OCI-LY7 (cell line): ENCODE measurements at regions of chr2 and their contacts with region 1.

Region 1: GRCh38 chr2:41782306-41783158 is 265.3 kb upstream of the PKDCC start:
- DNase-seq: peak; percentile 39
- H3K4me3 ChIP-seq: no peak overlapping the region
- H3K27ac ChIP-seq: no peak overlapping the region
- H3K4me1 ChIP-seq: no peaks in the 10 kb centered on the region
- CTCF ChIP-seq: peak; percentile 98

Region 2: DNA sequence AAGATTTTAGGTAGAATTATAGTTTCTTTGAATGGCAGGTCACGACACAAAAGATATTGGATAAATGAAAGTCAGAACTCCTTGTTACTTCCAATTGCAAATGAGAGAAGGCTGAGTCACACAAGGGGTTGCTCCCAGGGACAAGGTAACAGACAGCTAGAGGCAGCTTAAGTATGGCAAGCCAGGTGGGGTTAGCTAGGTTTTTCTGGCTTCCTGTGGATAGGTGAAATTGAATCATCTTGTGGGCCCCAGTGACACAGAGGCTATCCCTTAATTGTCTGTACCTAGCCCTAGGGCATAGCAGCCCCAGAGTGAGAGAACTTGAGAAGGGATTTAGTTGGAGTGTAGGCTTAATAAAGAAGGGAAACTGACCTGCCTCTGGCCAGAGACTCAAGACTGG is 922.9 kb before region 1 on chr2:
- CTCF ChIA-PET with region 1: no interaction called
- POLR2A ChIA-PET with region 1: no interaction called
- intact Hi-C with region 1: no loop called
- DNase-seq: no peak
- H3K4me3 ChIP-seq: no peak overlapping the region
- H3K27ac ChIP-seq: no peak overlapping the region
- H3K4me1 ChIP-seq: no peaks in the 10 kb centered on the region
- CTCF ChIP-seq: no peak

Region 3: GRCh38 chr2:41698678-41699422 is 83.7 kb before region 1 on chr2:
- CTCF ChIA-PET with region 1: no interaction called
- POLR2A ChIA-PET with region 1: no interaction called
- intact Hi-C with region 1: loop called (anchors 5 kb)
- DNase-seq: peak; percentile 14
- H3K4me3 ChIP-seq: no peak overlapping the region
- H3K27ac ChIP-seq: no peak overlapping the region
- H3K4me1 ChIP-seq: no peaks in the 10 kb centered on the region
- CTCF ChIP-seq: peak; percentile 87